Calu3 (cell line): ENCODE measurements at regions of chr4 and their contacts with region 1.

Region 1: GRCh38 chr4:140851032-140851636 is 94.9 kb upstream of the TBC1D9 start:
- DNase-seq: peak; percentile 44
- H3K4me3 Mint-ChIP-seq: no peak overlapping the region
- H3K27ac Mint-ChIP-seq: no peak overlapping the region
- H3K4me1 Mint-ChIP-seq: no peaks in the 10 kb centered on the region
- H3K27me3 Mint-ChIP-seq: no peaks in the 10 kb centered on the region
- CTCF ChIP-seq: peak; percentile 48

Region 2: DNA sequence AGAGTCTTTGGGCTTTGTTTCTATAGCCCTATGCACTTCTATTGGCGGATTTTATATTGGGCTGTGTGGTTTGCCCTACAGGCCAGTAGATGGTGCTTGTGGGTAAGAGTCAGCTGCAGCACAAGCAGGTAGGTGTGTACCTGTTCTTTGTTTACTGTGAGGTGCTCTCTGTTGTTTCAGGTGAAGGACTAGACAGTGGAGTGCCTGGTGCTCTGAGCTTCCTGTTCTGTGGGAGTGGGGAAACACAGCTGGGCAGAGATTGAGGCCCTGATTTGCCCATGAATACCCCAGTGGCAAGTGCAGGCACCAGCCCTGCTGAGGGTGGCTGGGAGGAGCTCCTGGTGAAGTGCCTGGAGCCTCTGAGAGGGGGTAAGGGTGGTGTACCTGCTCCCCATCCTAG is 256.1 kb before region 1 on chr4:
- CTCF ChIA-PET with region 1: interaction called, 14 read pairs
- intact Hi-C with region 1: loop called (anchors 1 kb)
- DNase-seq: peak; percentile 39
- H3K4me3 Mint-ChIP-seq: no peak overlapping the region
- H3K27ac Mint-ChIP-seq: no peak overlapping the region
- H3K4me1 Mint-ChIP-seq: no peaks in the 10 kb centered on the region
- H3K27me3 Mint-ChIP-seq: peaks cover 45% of the 10 kb centered on the region
- CTCF ChIP-seq: peak; percentile 63

Region 3: DNA sequence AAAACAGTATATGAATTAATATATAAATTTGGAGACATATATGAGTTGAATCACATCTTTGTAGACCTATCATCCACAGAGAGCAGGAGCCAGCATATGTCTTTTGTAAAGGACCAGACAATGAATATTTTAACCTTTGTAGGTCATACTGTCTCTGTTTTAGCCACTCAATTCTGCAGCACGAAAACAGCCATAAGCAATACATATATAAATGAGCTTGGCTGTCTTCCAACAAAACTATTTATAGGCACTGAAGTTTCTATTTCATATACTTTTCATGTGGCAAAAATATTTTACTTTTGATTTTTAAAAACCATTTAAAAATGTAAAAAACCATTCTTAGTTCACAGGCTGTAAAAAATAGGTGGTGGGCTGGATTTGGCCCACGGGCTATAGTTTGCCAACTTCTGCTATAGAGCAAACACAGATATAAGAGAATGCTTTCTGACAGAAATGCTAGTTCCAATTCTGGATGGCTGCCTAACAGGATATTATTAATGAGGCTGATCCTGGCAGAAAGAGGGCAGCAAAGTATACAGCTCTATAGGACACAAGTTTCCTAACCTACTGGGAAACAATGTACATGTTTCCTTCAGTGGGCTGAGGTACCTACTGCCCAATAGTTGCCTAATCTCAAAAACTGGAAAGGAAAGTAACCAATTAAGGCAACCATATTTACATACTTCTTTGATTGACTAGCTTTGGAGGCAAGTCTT is 224.3 kb before region 1 on chr4:
- CTCF ChIA-PET with region 1: interaction called, 4 read pairs
- intact Hi-C with region 1: loop called (anchors 2 kb)
- DNase-seq: no peak
- H3K4me3 Mint-ChIP-seq: no peak overlapping the region
- H3K27ac Mint-ChIP-seq: no peak overlapping the region
- H3K4me1 Mint-ChIP-seq: no peaks in the 10 kb centered on the region
- H3K27me3 Mint-ChIP-seq: no peaks in the 10 kb centered on the region
- CTCF ChIP-seq: no peak